Body of pancreas (tissue), 4 donors: ENCODE measurements at regions of chr4 and their contacts with region 1.

Region 1: DNA sequence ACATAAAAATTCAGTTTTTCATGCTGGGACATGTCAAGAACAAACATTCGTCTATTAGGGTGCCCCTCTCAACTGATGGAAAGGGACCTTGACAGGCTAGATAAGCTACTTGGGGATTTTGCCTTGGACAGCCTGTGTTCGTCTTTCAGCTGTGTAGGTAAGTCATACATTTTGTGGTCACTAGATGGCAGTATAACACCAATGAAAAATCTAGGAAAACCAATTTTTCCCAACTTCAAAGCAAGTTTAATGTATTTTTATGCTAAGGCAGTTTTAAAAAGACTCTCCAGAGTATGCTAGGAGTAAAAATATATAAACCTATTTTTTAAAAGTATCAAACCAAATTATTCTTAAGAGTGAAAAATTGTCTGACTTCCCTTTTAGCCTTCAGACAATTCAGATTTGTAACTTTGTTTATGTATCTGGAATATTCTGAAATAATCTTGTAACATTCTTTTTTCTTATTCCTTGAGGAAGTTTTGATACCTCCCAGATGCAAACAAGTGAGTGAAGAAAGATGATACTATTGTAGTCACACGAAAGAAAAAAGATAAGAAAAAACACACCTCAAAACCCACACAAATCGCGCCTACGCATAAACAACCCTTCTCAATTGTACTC is 158.3 kb downstream of the CPE start:
- DNase-seq: peak in 2 of 4 donors; percentile 9 to 30
- ATAC-seq: peak; percentile 73
- H3K4me3 ChIP-seq: no peak overlapping the region
- H3K27ac ChIP-seq: no peak overlapping the region
- H3K4me1 ChIP-seq: no peaks in the 10 kb centered on the region
- H3K27me3 ChIP-seq: no peaks in the 10 kb centered on the region
- CTCF ChIP-seq: peak; percentile 33 to 82 (median 73)
- POLR2A ChIP-seq: no peak

Region 2: GRCh38 chr4:165612936-165613335 is 75.8 kb after region 1 on chr4:
- intact Hi-C with region 1: no loop called
- DNase-seq: no peak
- ATAC-seq: no peak
- H3K4me3 ChIP-seq: no peak overlapping the region
- H3K27ac ChIP-seq: peak overlapping the region in 1 of 4 donors; percentile 7
- H3K4me1 ChIP-seq: peaks cover 10% of the 10 kb centered on the region
- H3K27me3 ChIP-seq: no peaks in the 10 kb centered on the region
- CTCF ChIP-seq: no peak
- POLR2A ChIP-seq: no peak

Region 3: GRCh38 chr4:166091912-166092510 is 554.9 kb after region 1 on chr4:
- intact Hi-C with region 1: loop called (anchors 5 kb)
- DNase-seq: peak in 1 of 4 donors; percentile 26
- ATAC-seq: peak; percentile 69
- H3K4me3 ChIP-seq: no peak overlapping the region
- H3K27ac ChIP-seq: no peak overlapping the region
- H3K4me1 ChIP-seq: peaks cover 10% of the 10 kb centered on the region
- H3K27me3 ChIP-seq: no peaks in the 10 kb centered on the region
- CTCF ChIP-seq: peak; percentile 32 to 85 (median 79)
- POLR2A ChIP-seq: no peak